GM13976 (cell line): ENCODE measurements at regions of chr12 and their contacts with region 1.

Region 1: DNA sequence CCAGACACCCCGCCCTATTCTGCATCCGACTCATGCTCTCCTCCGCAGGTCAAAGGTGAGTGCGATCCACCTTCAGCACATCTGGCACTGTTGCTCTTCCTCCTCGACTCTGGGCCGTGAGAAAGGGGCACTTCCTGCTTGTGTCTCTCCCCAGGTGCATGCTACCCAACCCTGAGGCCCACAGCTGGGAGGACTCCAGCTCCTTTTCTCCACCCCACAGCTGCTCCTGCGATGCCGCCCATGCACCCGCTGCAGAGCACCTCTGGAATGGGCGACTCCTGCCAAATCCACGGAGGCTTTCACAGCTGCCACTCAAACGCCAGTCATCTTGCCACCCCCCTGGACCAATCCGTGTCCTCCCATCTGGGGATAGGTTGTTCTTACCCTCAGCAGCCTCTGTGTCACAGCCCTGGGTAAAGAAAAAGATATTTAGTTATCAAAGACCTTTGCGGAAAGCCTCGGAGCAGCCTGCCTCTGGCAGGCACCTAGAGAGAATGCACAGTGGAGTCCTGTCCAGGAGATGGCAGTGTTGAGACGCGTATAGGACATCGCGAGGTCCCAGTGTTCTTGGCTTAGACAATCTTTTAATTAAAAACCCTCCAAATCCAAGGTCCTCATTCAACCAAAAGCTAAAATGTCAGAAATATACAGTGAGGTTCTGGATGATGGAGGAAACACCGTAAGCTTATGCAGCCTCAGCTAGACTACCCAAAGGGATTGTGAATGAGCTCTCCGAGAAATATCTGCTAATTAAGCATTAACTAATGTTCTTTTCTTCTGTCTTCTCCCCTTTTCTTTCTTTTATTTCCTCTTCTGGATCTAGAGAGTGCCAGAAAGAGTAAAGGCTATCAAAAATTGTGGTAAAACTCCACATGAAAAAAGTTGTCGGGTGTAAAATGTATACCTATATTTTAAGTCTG is 54.3 kb downstream of the MYRFL start:
- DNase-seq: peak; percentile 80
- CTCF ChIP-seq: peak; percentile 90

Region 2: DNA sequence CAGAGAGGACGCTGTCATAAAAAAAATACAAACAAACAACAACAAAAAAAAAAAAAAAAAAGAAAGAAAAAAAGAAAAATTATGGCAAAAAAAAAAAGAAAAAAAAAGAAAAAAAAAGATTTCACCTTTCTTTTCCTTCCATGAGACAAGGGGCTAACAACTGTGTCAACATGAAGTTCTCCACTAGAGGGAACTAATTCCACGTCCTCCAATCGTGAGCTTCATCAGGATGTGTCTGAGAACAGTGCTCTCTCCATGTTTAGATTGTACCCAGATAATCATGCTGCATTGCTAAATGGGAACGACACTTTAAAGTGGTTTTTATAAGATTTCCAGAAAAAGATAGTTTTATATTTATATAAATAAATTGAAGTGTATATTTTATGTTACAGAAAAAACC is 854.1 kb after region 1 on chr12:
- in situ Hi-C with region 1: loop called (anchors 25 kb)
- DNase-seq: peak; percentile 59
- CTCF ChIP-seq: peak; percentile 41